Panc1 (cell line): ENCODE measurements at regions of chr6 and their contacts with region 1.

Region 1: DNA sequence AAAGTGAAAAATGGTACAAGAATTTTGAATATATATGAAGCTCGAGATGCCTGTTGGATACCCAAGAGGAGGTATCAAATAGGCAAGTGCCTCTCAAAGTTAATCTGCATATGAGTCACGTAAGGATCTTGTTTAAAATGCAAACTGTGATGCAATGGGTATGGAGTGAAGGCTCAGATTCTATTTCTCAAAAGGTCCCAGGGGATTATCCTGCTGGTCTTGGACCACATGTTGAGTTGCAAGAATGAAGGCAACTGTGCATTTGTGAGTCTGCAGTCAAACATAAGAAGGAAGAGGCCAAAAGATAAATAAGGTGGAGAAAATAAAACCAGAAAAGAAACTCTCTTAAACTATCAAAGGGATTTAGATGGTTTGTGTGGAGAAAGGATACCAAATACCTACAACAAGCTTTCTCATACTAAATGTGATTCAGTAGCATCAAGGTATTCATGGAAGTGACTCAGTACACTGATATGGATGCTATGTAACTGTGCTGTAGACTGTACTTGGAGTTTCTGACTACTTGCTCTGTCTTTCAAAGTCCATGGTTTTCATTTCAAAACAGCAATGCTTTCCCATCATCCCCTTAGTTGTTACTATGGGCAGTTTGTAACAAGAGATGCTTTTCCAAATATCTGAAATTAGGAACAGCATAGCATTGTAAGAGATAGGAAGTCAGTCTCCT is 106.3 kb downstream of the GFRAL start:
- DNase-seq: no peak
- ATAC-seq: no peak
- H3K4me3 ChIP-seq: no peak overlapping the region
- H3K27ac ChIP-seq: no peak overlapping the region
- H3K4me1 ChIP-seq: no peaks in the 10 kb centered on the region
- H3K27me3 ChIP-seq: no peaks in the 10 kb centered on the region
- CTCF ChIP-seq: no peak

Region 2: GRCh38 chr6:54747955-54748354 is 685.6 kb before region 1 on chr6:
- CTCF ChIA-PET with region 1: no interaction called
- POLR2A ChIA-PET with region 1: no interaction called
- in situ Hi-C with region 1: no loop called
- intact Hi-C with region 1: no loop called
- DNase-seq: no peak
- ATAC-seq: no peak
- H3K4me3 ChIP-seq: no peak overlapping the region
- H3K27ac ChIP-seq: no peak overlapping the region
- H3K4me1 ChIP-seq: no peaks in the 10 kb centered on the region
- H3K27me3 ChIP-seq: no peaks in the 10 kb centered on the region
- CTCF ChIP-seq: no peak

Region 3: GRCh38 chr6:56037601-56038000 is 604.0 kb after region 1 on chr6:
- CTCF ChIA-PET with region 1: interaction called, 12 read pairs
- POLR2A ChIA-PET with region 1: no interaction called
- in situ Hi-C with region 1: no loop called
- intact Hi-C with region 1: no loop called
- DNase-seq: no peak
- ATAC-seq: no peak
- H3K4me3 ChIP-seq: no peak overlapping the region
- H3K27ac ChIP-seq: no peak overlapping the region
- H3K4me1 ChIP-seq: no peaks in the 10 kb centered on the region
- H3K27me3 ChIP-seq: no peaks in the 10 kb centered on the region
- CTCF ChIP-seq: no peak